Naive thymus-derived CD8-positive, alpha-beta T cell (primary cell): ENCODE measurements at regions of chr15 and their contacts with region 1.

Region 1: GRCh38 chr15:76340803-76341365 is 4.3 kb downstream of the ISL2 start:
- DNase-seq: peak in 4 of 10 donors; percentile 30 to 37 (median 34)
- ATAC-seq: peak; percentile 56 to 64
- H3K4me3 Mint-ChIP-seq: peak overlapping the region; percentile 77 to 98 (median 90)
- H3K27ac Mint-ChIP-seq: no peak overlapping the region
- H3K4me1 Mint-ChIP-seq: peaks cover 37 to 69% (median 63%) of the 10 kb centered on the region in 4 donors
- H3K27me3 Mint-ChIP-seq: peaks cover 52 to 89% (median 64%) of the 10 kb centered on the region in 5 donors

Region 2: DNA sequence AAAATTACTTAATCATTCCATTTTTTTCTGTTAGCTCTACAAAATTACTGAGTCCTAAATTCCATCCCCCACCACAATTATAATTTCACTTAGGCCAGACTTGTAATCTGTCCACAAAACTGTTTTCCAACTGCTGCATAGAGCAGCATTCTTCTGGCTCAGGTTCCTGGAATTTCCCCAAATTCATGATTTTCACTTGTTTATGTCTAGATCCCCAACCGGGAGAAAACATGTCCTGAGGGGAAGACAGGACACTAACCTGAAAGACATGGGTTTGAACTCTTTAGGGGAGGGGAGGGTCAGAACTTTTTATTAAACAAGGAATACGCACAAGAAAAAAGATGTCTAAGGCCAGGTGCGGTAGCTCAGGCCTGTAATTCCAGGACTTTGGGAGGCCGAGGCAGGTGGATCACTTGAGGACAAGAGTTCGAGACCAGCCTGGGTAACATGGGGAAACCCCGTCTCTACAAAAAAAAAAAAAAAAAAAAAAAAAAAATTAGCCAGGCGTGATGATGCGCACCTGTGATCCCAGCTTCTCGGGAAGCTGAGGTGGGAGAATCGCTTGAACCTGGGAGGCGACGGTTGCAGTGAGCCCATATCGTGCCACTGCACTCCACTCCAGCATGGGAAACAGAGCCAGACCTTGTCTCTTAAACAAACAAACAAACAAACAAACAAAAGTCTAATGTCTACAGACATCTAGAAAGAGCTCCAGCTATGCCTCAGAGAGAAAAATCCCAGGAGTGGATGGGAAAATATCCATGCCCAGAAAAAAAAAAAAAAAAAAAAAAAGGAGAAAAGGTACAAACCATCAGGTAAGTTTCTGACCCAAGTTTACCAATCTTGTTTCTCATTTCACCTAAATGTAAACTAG is 31.0 kb before region 1 on chr15:
- POLR2A ChIA-PET with region 1: interaction called, 10 read pairs
- DNase-seq: no peak
- ATAC-seq: no peak
- H3K4me3 Mint-ChIP-seq: peak overlapping the region; percentile 60 to 94 (median 90)
- H3K27ac Mint-ChIP-seq: peak overlapping the region in 6 of 10 donors; percentile 28 to 94 (median 86)
- H3K4me1 Mint-ChIP-seq: peaks cover 20 to 55% (median 52%) of the 10 kb centered on the region in 4 donors
- H3K27me3 Mint-ChIP-seq: no peaks in the 10 kb centered on the region